Dorsolateral prefrontal cortex (tissue), 120 donors: ENCODE measurements at regions of chr16 and their contacts with region 1.

Region 1: GRCh38 chr16:51167167-51167895 is 16.3 kb upstream of the SALL1 start:
- DNase-seq: no peak
- H3K4me3 ChIP-seq: no peak overlapping the region
- H3K27ac ChIP-seq: peak overlapping the region in 4 of 59 donors; percentile 6 to 32 (median 20)
- H3K27me3 ChIP-seq: peaks cover 0 to 5% (median 0%) of the 10 kb centered on the region in 45 donors
- CTCF ChIP-seq: no peak

Region 2: DNA sequence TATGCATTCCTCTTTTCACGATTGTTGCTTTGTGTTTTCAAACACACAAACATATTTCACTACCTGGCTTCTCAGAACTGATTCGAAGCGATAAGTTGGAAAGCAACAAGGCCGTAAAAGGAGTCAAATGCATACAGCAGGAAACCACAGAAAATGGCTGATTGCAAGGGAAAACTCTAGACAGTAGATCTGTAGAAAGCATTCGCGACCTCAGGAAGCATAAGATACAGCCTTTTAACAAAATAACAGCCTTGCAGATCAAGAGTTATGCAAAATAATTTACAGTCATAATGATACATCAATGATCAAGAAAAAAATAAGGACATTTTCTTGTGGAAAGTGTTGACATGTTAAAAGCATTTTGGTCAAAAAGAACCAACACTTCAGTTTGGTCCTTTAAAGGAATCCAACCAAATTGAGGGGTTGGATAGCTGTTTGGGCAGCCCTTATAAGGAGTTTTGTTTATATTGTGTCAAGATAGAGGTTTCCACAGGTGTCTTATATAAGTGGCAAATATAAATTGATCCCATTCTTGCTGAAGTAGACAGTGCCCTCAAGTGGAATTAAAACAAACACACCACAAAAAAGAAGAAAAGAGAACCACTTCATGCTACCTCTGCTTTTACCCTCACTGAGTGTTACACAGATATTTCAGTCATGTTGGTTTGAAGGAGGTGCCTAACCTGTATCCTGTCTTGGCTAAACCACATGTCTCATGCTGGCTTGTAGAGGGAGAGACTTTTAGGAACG is 419.9 kb before region 1 on chr16:
- intact Hi-C with region 1: no loop called
- DNase-seq: no peak
- H3K4me3 ChIP-seq: peak overlapping the region in 2 of 59 donors; percentile 2 to 19
- H3K27ac ChIP-seq: peak overlapping the region in 33 of 59 donors; percentile 2 to 66 (median 31)
- H3K27me3 ChIP-seq: no peaks in the 10 kb centered on the region
- CTCF ChIP-seq: peak in 53 of 56 donors; percentile 21 to 72 (median 53)

Region 3: GRCh38 chr16:51048544-51048943 is 118.8 kb before region 1 on chr16:
- intact Hi-C with region 1: no loop called
- DNase-seq: no peak
- H3K4me3 ChIP-seq: no peak overlapping the region
- H3K27ac ChIP-seq: no peak overlapping the region
- H3K27me3 ChIP-seq: peaks cover 0 to 16% (median 0%) of the 10 kb centered on the region in 45 donors
- CTCF ChIP-seq: no peak

Region 4: GRCh38 chr16:51231702-51232101 is 64.4 kb after region 1 on chr16:
- intact Hi-C with region 1: loop called in 1 of 2 experiments (anchors 5 kb)
- DNase-seq: no peak
- H3K4me3 ChIP-seq: no peak overlapping the region
- H3K27ac ChIP-seq: peak overlapping the region in 9 of 59 donors; percentile 4 to 47 (median 19)
- H3K27me3 ChIP-seq: peaks cover 0 to 4% (median 0%) of the 10 kb centered on the region in 45 donors
- CTCF ChIP-seq: no peak